ENCODE measurements at regions of chr5 and their contacts with region 1.

Region 1: GRCh38 chr5:90783460-90784333 is 225.1 kb downstream of the ADGRV1 start:
- DNase-seq: peak; percentile 58
- ATAC-seq: peak; percentile 63 to 78

Region 2: DNA sequence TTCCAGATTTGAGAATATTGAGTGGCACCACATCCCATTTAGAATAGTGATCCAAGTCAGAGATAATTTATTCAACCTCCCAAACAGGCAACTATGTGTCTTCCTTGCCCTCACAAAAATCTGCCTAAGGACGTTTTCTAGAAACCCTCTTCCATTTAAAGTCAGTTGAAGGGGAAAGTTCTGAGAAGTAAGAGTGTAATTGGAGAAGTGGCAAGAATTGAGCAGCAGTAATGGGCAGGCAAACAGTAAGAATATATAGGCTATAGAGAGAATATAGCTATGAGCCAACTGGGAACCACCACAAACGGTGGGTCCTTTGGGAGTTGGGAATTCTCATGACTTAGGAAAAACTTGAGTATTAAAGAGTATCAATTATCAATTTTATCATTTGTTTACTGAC is 343.1 kb before region 1 on chr5:
- intact Hi-C with region 1: loop called in 1 of 2 experiments (anchors 2 kb)
- DNase-seq: no peak
- ATAC-seq: no peak

Region 3: DNA sequence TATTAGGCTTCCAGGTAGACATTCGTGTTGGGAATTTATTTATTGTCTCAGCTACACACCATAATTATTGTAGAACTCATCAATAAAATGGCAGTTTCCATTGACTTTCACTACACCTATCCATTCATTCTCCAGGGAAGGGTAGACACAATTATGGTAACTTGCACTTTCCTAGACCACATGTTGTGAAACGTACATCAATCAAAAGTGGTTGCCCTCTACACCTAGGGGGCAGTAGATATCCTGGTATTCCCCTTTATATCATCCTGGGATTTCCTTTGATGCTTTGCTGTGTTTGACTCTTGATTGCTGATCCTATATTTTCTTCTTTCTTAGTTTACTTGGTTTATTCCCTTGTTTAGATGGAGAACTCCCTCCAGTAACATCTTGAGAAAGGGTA is 177.2 kb before region 1 on chr5:
- intact Hi-C with region 1: loop called in 1 of 2 experiments (anchors 10 kb)
- DNase-seq: no peak
- ATAC-seq: no peak

Region 4: GRCh38 chr5:90709323-90710155 is 74.2 kb before region 1 on chr5:
- intact Hi-C with region 1: loop called in 1 of 2 experiments (anchors 1 kb)
- DNase-seq: peak; percentile 28
- ATAC-seq: peak in 1 of 2 donors; percentile 51